ENCODE measurements at regions of chr20 and their contacts with region 1.

Region 1: GRCh38 chr20:37336369-37337207 is 9.4 kb upstream of the SRC start:
- DNase-seq: peak; percentile 87
- CTCF ChIP-seq: no peak

Region 2: GRCh38 chr20:37323985-37324384 is 12.6 kb before region 1 on chr20:
- CTCF ChIA-PET with region 1: no interaction called
- POLR2A ChIA-PET with region 1: no interaction called
- DNase-seq: no peak
- CTCF ChIP-seq: no peak

Region 3: DNA sequence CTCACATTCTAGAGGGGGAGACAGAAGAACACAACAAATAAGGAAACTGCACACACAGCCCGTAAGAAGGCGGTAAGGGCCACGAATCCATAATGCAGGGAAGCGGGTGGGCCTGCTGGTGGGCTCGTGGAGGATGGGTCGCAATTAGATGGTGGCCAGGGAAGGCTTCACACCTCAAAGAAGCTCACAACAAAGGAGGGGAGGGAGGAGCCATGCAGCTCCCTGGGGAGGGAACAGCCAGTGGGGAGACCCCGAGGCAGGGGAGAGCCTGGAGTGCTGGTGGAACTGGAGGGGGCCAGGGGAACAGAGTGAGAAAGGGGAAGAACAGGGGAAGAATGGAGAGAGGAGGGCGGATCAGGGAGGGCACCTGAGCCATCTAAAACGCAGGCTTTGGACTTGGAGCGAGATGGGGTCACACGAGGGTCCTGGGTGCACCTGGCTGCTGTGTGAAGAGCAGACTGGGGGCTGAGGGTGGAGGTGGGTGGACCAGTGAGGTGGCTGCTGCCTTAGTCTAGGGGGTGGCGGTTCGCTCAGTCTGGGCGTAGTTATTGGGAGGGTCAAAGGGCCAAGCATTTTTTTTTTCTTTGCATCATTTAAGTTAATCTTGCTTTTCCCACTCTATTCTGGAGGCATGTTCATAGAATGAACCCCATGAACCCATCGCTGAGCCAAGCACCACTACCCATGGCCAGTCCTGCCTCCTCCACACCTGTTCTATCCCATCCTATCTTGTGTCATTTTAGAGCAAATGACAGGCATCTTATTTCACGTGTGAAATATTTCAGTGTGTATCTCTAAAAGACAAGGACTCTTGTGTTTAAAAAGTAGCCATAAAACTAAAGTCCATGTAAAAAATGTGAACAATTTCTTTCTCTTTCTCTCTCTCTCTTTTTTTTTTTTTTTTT is 23.0 kb after region 1 on chr20:
- CTCF ChIA-PET with region 1: interaction called, 3 read pairs
- POLR2A ChIA-PET with region 1: interaction called, 11 read pairs
- DNase-seq: no peak
- CTCF ChIP-seq: no peak